ENCODE measurements at regions of chr4 and their contacts with region 1.

Region 1: GRCh38 chr4:90951027-90951426 is 823.8 kb downstream of the CCSER1 start:
- DNase-seq: peak; percentile 23
- H3K4me3 Mint-ChIP-seq: no peak overlapping the region
- H3K27ac Mint-ChIP-seq: no peak overlapping the region
- H3K4me1 Mint-ChIP-seq: peaks cover 10% of the 10 kb centered on the region
- H3K27me3 Mint-ChIP-seq: no peaks in the 10 kb centered on the region
- CTCF ChIP-seq: no peak

Region 2: DNA sequence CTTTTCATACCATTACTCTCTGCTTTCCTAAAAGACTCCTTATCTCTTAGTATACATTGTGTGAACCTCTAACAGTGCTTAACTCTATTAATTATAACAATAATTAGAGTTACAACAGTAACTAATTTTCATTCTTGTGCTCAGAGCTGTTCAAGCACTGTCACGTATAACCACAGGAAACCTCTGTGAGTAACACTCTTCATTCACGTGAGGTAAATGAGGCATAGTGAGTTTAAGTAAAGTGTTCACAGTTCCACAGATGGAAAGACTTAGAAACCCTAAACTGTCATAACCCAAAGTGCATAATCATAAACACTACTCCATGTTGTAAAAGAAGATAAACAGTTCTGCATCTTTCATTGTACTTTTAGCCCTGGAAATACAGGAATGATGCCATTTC is 601.4 kb before region 1 on chr4:
- CTCF ChIA-PET with region 1: no interaction called
- intact Hi-C with region 1: no loop called
- DNase-seq: no peak
- H3K4me3 Mint-ChIP-seq: no peak overlapping the region
- H3K27ac Mint-ChIP-seq: no peak overlapping the region
- H3K4me1 Mint-ChIP-seq: no peaks in the 10 kb centered on the region
- H3K27me3 Mint-ChIP-seq: no peaks in the 10 kb centered on the region
- CTCF ChIP-seq: no peak

Region 3: GRCh38 chr4:90425893-90426292 is 525.1 kb before region 1 on chr4:
- CTCF ChIA-PET with region 1: no interaction called
- intact Hi-C with region 1: loop called (anchors 10 kb)
- DNase-seq: no peak
- H3K4me3 Mint-ChIP-seq: no peak overlapping the region
- H3K27ac Mint-ChIP-seq: no peak overlapping the region
- H3K4me1 Mint-ChIP-seq: no peaks in the 10 kb centered on the region
- H3K27me3 Mint-ChIP-seq: no peaks in the 10 kb centered on the region
- CTCF ChIP-seq: no peak

Region 4: DNA sequence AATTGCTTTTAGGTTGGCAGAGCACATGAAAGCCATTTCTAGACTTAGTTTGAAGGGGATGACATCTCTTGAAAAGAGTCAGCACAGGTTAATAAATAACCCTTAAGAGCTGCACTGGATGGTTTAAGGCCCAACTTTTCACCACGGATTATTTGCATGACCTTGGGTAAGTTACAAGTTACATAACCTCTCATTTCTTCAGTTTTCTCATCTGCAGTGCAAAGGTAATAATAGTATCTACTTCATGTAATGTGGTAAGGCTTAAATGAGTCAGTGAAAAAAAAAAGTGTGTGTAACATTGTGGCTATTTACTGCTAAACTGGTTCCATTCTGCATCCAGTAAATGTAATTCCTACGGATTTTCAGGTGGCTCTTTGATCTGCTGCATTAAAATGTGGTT is 108.1 kb before region 1 on chr4:
- CTCF ChIA-PET with region 1: no interaction called
- intact Hi-C with region 1: loop called (anchors 10 kb)
- DNase-seq: no peak
- H3K4me3 Mint-ChIP-seq: no peak overlapping the region
- H3K27ac Mint-ChIP-seq: no peak overlapping the region
- H3K4me1 Mint-ChIP-seq: peaks cover 40% of the 10 kb centered on the region
- H3K27me3 Mint-ChIP-seq: no peaks in the 10 kb centered on the region
- CTCF ChIP-seq: no peak

Region 5: DNA sequence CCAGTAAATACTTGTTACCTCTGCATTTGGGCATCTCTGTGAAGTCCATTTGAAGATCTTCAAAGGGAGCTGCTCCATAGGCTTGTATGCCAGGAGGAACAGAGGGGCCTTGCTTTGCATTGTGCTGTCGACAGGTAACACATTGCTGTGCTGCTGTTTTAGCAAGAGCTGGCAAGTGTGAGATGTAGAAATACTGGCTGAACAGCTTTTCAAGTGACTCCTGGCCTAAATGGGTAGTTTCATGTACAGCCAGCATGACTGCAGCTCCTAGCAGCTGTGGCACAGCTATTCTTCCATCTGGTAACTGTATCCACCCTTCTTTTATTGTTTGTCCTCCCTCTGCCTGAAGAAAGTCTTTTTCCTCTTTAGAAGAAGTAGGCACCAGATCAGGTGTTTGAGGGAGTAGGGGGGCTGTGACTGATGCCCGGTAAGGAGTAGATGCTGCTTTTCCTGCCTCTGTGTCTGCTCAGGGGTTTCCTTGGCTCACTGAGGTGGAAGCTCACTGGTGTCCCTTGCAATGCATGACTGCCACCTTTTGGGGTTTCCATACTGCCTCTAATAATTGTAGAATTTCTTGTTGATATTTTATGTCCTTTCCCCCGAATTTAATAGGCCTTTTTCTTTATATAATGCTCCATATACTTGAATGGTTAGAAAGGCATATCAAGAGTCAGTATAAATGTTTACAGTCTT is 141.5 kb after region 1 on chr4:
- CTCF ChIA-PET with region 1: interaction called, 3 read pairs
- intact Hi-C with region 1: loop called (anchors 10 kb)
- DNase-seq: peak; percentile 23
- H3K4me3 Mint-ChIP-seq: no peak overlapping the region
- H3K27ac Mint-ChIP-seq: no peak overlapping the region
- H3K4me1 Mint-ChIP-seq: no peaks in the 10 kb centered on the region
- H3K27me3 Mint-ChIP-seq: no peaks in the 10 kb centered on the region
- CTCF ChIP-seq: no peak